ENCODE measurements at regions of chr9 and their contacts with region 1.

Region 1: GRCh38 chr9:90851444-90851843 is 49.8 kb downstream of the SYK start:
- DNase-seq: no peak
- H3K4me3 ChIP-seq: no peak overlapping the region
- H3K27ac ChIP-seq: no peak overlapping the region
- H3K4me1 ChIP-seq: no peaks in the 10 kb centered on the region
- H3K27me3 ChIP-seq: no peaks in the 10 kb centered on the region
- CTCF ChIP-seq: peak in 2 of 3 experiments; percentile 34 to 40; a peak in 2 of 4 replicates
- EP300 ChIP-seq: no peak
- POLR2A ChIP-seq: no peak
- RAD21 ChIP-seq: peak in 1 of 2 experiments; percentile 4; a peak in 1 of 4 replicates

Region 2: DNA sequence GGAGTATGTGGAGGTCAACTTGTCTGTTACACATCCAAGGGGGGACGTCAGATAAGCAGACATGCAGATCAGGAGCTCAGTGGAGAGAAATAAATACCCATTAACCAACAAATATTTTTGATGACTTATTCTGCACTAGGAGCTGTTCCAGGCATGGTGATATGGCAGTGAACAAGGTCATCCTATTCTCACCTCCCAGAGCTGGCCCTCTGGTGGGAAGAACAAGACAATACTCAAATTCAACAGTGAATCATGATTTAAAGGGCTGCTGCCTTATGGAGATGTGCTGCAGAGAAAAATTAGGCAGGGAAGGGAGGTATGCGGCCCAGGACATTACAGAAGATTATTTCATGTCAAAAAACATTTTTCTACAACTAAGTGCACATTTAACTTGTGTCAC is 13.3 kb before region 1 on chr9:
- CTCF ChIA-PET with region 1: interaction called, 12 read pairs
- POLR2A ChIA-PET with region 1: no interaction called
- DNase-seq: no peak
- H3K4me3 ChIP-seq: no peak overlapping the region
- H3K27ac ChIP-seq: no peak overlapping the region
- H3K4me1 ChIP-seq: no peaks in the 10 kb centered on the region; a peak in 1 of 7 replicates
- H3K27me3 ChIP-seq: no peaks in the 10 kb centered on the region; a peak in 1 of 7 replicates
- CTCF ChIP-seq: peak in 2 of 3 experiments; percentile 8 to 17; a peak in 2 of 4 replicates
- EP300 ChIP-seq: no peak
- POLR2A ChIP-seq: no peak
- RAD21 ChIP-seq: peak in 1 of 2 experiments; percentile 21; a peak in 2 of 4 replicates

Region 3: GRCh38 chr9:90870621-90871326 is 19.3 kb after region 1 on chr9:
- CTCF ChIA-PET with region 1: interaction called, 11 read pairs
- POLR2A ChIA-PET with region 1: no interaction called
- DNase-seq: no peak
- H3K4me3 ChIP-seq: no peak overlapping the region
- H3K27ac ChIP-seq: no peak overlapping the region
- H3K4me1 ChIP-seq: no peaks in the 10 kb centered on the region
- H3K27me3 ChIP-seq: no peaks in the 10 kb centered on the region
- CTCF ChIP-seq: peak in 2 of 3 experiments; percentile 72 to 76; a peak in 3 of 4 replicates
- EP300 ChIP-seq: no peak
- POLR2A ChIP-seq: no peak
- RAD21 ChIP-seq: peak; percentile 87

Region 4: DNA sequence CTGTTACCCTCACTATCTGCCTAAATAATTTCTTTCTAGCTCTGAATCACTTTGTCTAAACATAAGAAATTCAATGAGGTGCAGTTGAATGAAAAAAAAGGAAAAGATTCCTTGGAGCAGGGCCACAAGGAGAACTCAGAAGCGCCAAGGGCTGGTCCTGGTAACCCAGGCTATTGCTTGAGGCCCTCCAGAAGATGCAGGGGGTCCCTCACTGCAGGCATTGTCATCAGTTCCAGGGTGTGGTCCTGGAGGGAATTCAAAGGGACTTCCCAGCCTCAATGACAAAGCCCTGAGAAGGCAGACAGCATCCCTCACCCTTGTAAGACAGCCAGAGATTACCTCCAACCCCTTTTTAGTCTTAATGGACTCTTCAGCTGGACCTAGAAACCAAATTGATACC is 40.2 kb after region 1 on chr9:
- CTCF ChIA-PET with region 1: no interaction called
- POLR2A ChIA-PET with region 1: no interaction called
- DNase-seq: no peak
- H3K4me3 ChIP-seq: no peak overlapping the region
- H3K27ac ChIP-seq: no peak overlapping the region
- H3K4me1 ChIP-seq: peaks cover 7 to 23% (median 19%) of the 10 kb centered on the region in 4 experiments
- H3K27me3 ChIP-seq: no peaks in the 10 kb centered on the region
- CTCF ChIP-seq: no peak
- EP300 ChIP-seq: no peak
- POLR2A ChIP-seq: no peak
- RAD21 ChIP-seq: no peak

Region 5: GRCh38 chr9:90914868-90915483 is 63.5 kb after region 1 on chr9:
- CTCF ChIA-PET with region 1: no interaction called
- POLR2A ChIA-PET with region 1: no interaction called
- DNase-seq: peak; percentile 54 to 79
- H3K4me3 ChIP-seq: no peak overlapping the region
- H3K27ac ChIP-seq: no peak overlapping the region
- H3K4me1 ChIP-seq: no peaks in the 10 kb centered on the region
- H3K27me3 ChIP-seq: no peaks in the 10 kb centered on the region
- CTCF ChIP-seq: peak; percentile 83 to 93 (median 92)
- EP300 ChIP-seq: no peak
- POLR2A ChIP-seq: no peak
- RAD21 ChIP-seq: peak; percentile 97 to 98

Measured in H1 (cell line).